SK-N-SH (cell line): ENCODE measurements at regions of chr19 and their contacts with region 1.

Region 1: GRCh38 chr19:18450931-18451845 is 13.3 kb upstream of the ISYNA1 start:
- DNase-seq: peak; percentile 95
- H3K4me3 ChIP-seq: peak overlapping the region in 1 of 2 experiments; percentile 50; a peak in 1 of 4 replicates
- H3K27ac ChIP-seq: no peak overlapping the region
- H3K4me1 ChIP-seq: peaks cover 2 to 4% of the 10 kb centered on the region in 2 experiments; a peak in 1 of 4 replicates
- H3K27me3 ChIP-seq: no peaks in the 10 kb centered on the region
- CTCF ChIP-seq: peak; percentile 95
- EP300 ChIP-seq: no peak
- RAD21 ChIP-seq: peak; percentile 89

Region 2: GRCh38 chr19:18379803-18380747 is 71.1 kb before region 1 on chr19:
- CTCF ChIA-PET with region 1: no interaction called
- POLR2A ChIA-PET with region 1: no interaction called
- DNase-seq: no peak
- H3K4me3 ChIP-seq: no peak overlapping the region
- H3K27ac ChIP-seq: no peak overlapping the region
- H3K4me1 ChIP-seq: peaks cover 0 to 8% of the 10 kb centered on the region in 2 experiments; a peak in 2 of 4 replicates
- H3K27me3 ChIP-seq: no peaks in the 10 kb centered on the region
- CTCF ChIP-seq: no peak
- EP300 ChIP-seq: no peak
- RAD21 ChIP-seq: no peak

Region 3: GRCh38 chr19:18419195-18419698 is 31.9 kb before region 1 on chr19 and contains the start of gene SSBP4:
- CTCF ChIA-PET with region 1: interaction called, 11 read pairs
- POLR2A ChIA-PET with region 1: no interaction called
- DNase-seq: peak; percentile 97
- H3K4me3 ChIP-seq: peak within 1 kb of the TSS; percentile 68 to 74
- H3K27ac ChIP-seq: peak within 1 kb of the TSS; percentile 89 to 93; a peak in 3 of 4 replicates
- H3K4me1 ChIP-seq: peaks cover 41 to 53% of the 10 kb centered on the region in 2 experiments; a peak in 3 of 4 replicates
- H3K27me3 ChIP-seq: no peaks in the 10 kb centered on the region
- CTCF ChIP-seq: peak; percentile 12; the same call in 1 of the 2 replicates
- EP300 ChIP-seq: peak; percentile 59 to 65; a peak in 2 of 4 replicates
- RAD21 ChIP-seq: no peak
- polyA plus RNA-seq, gene SSBP4: 22.5 and 24.9 TPM in 2 replicates

Region 4: DNA sequence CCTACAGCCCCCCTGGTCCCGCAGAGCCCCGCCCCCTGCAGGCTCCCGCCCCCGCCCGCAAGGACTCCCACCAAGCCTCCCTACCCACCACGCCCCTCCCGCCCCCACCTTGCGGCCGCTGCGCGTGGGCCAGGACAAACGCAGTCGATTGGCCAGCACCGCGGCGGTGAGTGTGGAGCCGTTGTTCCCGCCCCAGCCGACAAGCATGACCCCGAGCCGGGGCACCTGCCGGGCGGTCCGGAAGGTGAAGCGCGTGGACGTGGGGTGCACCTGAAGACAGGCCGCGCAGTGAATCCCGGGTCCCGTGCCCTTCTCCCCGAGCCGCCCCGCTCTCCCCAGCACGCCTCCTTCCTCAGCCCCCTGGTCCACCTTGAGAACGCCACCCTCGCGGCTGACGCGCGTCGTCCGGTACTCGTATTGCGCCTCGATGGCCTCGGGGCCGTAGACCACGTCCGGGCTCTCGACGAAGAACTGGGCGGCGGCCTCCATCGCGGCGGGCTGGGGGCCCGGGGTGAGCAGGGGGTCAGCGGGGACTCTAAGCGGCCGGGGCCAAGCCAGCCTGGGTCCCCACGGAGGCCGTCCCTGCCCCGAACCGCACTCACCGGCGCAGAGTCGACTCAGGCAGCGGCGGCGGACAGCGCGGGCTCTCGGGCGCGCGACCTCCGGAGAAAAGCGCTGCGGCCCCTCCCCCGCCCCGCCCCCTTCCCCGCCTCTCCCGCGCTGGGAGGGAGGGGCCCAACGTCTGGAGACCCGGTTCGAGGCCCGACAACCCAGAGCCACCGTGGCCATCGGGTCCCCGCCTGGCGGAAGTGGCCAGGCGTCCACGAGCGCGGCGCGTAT is 13.5 kb before region 1 on chr19 and contains the start of gene ISYNA1:
- CTCF ChIA-PET with region 1: interaction called, 30 read pairs
- POLR2A ChIA-PET with region 1: no interaction called
- DNase-seq: peak; percentile 94
- H3K4me3 ChIP-seq: peak within 1 kb of the TSS; percentile 62 to 65
- H3K27ac ChIP-seq: peak within 1 kb of the TSS; percentile 32 to 82; a peak in 3 of 4 replicates
- H3K4me1 ChIP-seq: peaks cover 0 to 25% of the 10 kb centered on the region in 2 experiments; a peak in 2 of 4 replicates
- H3K27me3 ChIP-seq: no peaks in the 10 kb centered on the region
- CTCF ChIP-seq: no peak
- EP300 ChIP-seq: no peak
- RAD21 ChIP-seq: no peak
- polyA plus RNA-seq, gene ISYNA1: 48.0 and 49.4 TPM in 2 replicates

Region 5: GRCh38 chr19:18478569-18479311 is 27.6 kb after region 1 on chr19:
- CTCF ChIA-PET with region 1: interaction called, 11 read pairs
- POLR2A ChIA-PET with region 1: no interaction called
- DNase-seq: peak; percentile 70
- H3K4me3 ChIP-seq: no peak overlapping the region
- H3K27ac ChIP-seq: peak overlapping the region; percentile 60 to 63
- H3K4me1 ChIP-seq: peaks cover 21 to 28% of the 10 kb centered on the region in 2 experiments; a peak in 2 of 4 replicates
- H3K27me3 ChIP-seq: no peaks in the 10 kb centered on the region
- CTCF ChIP-seq: no peak
- EP300 ChIP-seq: no peak
- RAD21 ChIP-seq: no peak

Region 6: GRCh38 chr19:18521885-18522624 is 70.9 kb after region 1 on chr19 and contains the start of gene ELL:
- CTCF ChIA-PET with region 1: interaction called, 21 read pairs
- POLR2A ChIA-PET with region 1: no interaction called
- DNase-seq: peak; percentile 96
- H3K4me3 ChIP-seq: peak within 1 kb of the TSS; percentile 73 to 97
- H3K27ac ChIP-seq: peak within 1 kb of the TSS; percentile 72 to 95
- H3K4me1 ChIP-seq: peaks cover 4 to 11% of the 10 kb centered on the region in 2 experiments; a peak in 1 of 4 replicates
- H3K27me3 ChIP-seq: no peaks in the 10 kb centered on the region
- CTCF ChIP-seq: no peak
- EP300 ChIP-seq: no peak
- RAD21 ChIP-seq: no peak
- polyA plus RNA-seq, gene ELL: 3.6 and 7.4 TPM in 2 replicates

Region 7: DNA sequence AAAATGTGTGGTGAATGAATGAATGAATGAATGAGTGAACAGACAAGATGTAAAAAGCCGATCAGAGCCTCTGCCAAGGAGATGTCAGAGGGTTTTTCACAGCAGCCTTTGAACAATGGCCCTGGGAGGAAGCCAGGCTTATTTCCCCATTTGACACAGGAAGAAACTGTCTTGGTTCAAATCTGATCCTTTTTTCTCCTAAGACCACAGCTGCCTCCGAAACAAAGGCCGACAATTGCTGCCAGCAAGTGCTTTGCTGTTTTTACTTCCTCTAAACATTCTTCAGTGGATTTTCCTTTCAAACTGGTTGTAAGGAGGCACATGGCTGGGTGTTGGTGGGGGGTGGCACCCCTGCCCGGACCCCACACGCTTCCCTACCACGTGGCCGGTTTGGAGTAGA is 534.1 kb after region 1 on chr19:
- CTCF ChIA-PET with region 1: interaction called, 12 read pairs
- POLR2A ChIA-PET with region 1: no interaction called
- DNase-seq: no peak
- H3K4me3 ChIP-seq: no peak overlapping the region
- H3K27ac ChIP-seq: no peak overlapping the region
- H3K4me1 ChIP-seq: no peaks in the 10 kb centered on the region
- H3K27me3 ChIP-seq: no peaks in the 10 kb centered on the region; the same call in 1 of the 2 replicates
- CTCF ChIP-seq: no peak
- EP300 ChIP-seq: no peak
- RAD21 ChIP-seq: no peak